AG04450 (cell line): ENCODE measurements at regions of chr1 and their contacts with region 1.

Region 1: DNA sequence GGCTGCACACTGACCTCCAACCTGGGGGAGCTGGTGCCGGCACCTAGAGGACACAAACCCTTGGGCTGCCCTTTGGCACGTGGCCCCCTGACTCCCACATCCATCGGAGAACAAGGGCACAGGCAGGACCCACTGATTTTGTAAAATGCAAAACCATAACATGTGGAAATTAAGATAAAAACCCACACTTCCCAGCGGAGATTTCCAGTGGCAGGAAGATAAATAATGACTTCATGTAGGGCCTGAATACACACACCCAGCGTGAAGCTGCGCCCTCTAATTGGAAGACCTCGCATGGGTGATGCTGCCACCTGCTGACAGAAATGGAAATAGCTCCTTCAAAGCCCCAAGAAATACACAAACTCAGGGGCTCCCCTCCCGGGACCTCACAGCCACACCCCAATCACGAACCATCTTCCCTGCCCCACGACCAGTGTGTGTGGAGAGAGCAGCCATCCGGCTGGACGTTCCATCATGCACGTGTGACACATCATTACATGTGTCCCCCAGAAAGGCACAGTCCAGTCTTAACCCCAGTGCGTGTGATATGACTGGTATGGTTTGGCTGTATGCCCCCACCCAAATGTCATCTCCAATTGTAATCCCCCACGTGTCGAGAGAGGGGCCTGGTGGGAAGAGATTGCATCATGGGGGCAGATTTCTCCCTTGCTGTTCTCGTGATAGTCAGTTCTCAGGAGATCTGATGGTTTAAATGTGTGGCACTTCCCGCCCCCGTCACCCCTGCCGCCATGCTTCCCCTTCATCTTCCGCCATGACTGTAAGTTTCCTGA is 5.7 kb upstream of the TPRG1L start:
- DNase-seq: peak; percentile 58
- H3K4me3 ChIP-seq: no peak overlapping the region
- H3K27ac ChIP-seq: no peak overlapping the region
- H3K27me3 ChIP-seq: peaks cover 5% of the 10 kb centered on the region
- CTCF ChIP-seq: peak; percentile 89

Region 2: GRCh38 chr1:3349161-3349967 is 269.7 kb before region 1 on chr1:
- CTCF ChIA-PET with region 1: no interaction called
- POLR2A ChIA-PET with region 1: no interaction called
- DNase-seq: no peak
- H3K4me3 ChIP-seq: no peak overlapping the region
- H3K27ac ChIP-seq: no peak overlapping the region
- H3K27me3 ChIP-seq: peaks cover 4% of the 10 kb centered on the region
- CTCF ChIP-seq: peak; percentile 29

Region 3: GRCh38 chr1:3491291-3492246 is 127.5 kb before region 1 on chr1:
- CTCF ChIA-PET with region 1: interaction called, 20 read pairs
- POLR2A ChIA-PET with region 1: interaction called, 5 read pairs
- DNase-seq: no peak
- H3K4me3 ChIP-seq: no peak overlapping the region
- H3K27ac ChIP-seq: no peak overlapping the region
- H3K27me3 ChIP-seq: peaks cover 6% of the 10 kb centered on the region
- CTCF ChIP-seq: peak; percentile 91

Region 4: GRCh38 chr1:3564921-3565827 is 53.9 kb before region 1 on chr1:
- CTCF ChIA-PET with region 1: interaction called, 73 read pairs
- POLR2A ChIA-PET with region 1: no interaction called
- DNase-seq: no peak
- H3K4me3 ChIP-seq: no peak overlapping the region
- H3K27ac ChIP-seq: no peak overlapping the region
- H3K27me3 ChIP-seq: peaks cover 17% of the 10 kb centered on the region
- CTCF ChIP-seq: peak; percentile 90

Region 5: GRCh38 chr1:3577300-3577699 is 41.8 kb before region 1 on chr1:
- CTCF ChIA-PET with region 1: interaction called, 10 read pairs
- POLR2A ChIA-PET with region 1: no interaction called
- DNase-seq: peak; percentile 34
- H3K4me3 ChIP-seq: no peak overlapping the region
- H3K27ac ChIP-seq: no peak overlapping the region
- H3K27me3 ChIP-seq: peaks cover 7% of the 10 kb centered on the region
- CTCF ChIP-seq: no peak

Region 6: DNA sequence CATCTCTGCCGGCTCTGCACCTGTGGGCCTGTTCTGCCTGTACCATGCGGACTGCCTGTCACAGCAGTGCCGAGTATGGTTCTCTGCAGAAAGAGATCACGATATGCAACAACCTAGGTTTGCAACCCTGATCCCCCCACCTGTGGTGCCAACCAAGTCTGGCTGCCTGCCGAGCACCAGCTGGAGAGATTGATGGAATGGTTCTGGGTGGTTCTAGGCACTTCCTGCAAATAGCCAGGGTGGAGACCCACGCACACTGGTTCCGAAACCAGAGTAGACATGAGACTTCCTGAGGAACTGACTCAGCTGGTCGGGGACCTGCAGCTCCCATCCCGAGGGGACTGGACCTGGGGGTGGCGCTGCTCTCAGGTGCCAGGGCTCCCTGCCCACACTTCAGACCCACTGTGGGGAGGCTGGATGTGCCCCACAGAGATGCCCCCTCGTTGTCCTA is 11.1 kb after region 1 on chr1:
- CTCF ChIA-PET with region 1: interaction called, 16 read pairs
- POLR2A ChIA-PET with region 1: no interaction called
- DNase-seq: no peak
- H3K4me3 ChIP-seq: no peak overlapping the region
- H3K27ac ChIP-seq: no peak overlapping the region
- H3K27me3 ChIP-seq: no peaks in the 10 kb centered on the region
- CTCF ChIP-seq: no peak